Gastrocnemius medialis (tissue), 4 donors: ENCODE measurements at regions of chr5 and their contacts with region 1.

Region 1: GRCh38 chr5:143057580-143057999 is 287.4 kb downstream of the ARHGAP26 start:
- DNase-seq: peak in 1 of 2 donors; percentile 67
- ATAC-seq: peak; percentile 47 to 76
- H3K4me3 ChIP-seq: peak overlapping the region in 3 of 4 donors; percentile 0 to 15 (median 10)
- H3K27ac ChIP-seq: peak overlapping the region; percentile 86 to 91 (median 88)
- H3K4me1 ChIP-seq: peaks cover 93 to 97% of the 10 kb centered on the region in 2 donors
- H3K27me3 ChIP-seq: no peaks in the 10 kb centered on the region
- CTCF ChIP-seq: no peak
- POLR2A ChIP-seq: no peak

Region 2: DNA sequence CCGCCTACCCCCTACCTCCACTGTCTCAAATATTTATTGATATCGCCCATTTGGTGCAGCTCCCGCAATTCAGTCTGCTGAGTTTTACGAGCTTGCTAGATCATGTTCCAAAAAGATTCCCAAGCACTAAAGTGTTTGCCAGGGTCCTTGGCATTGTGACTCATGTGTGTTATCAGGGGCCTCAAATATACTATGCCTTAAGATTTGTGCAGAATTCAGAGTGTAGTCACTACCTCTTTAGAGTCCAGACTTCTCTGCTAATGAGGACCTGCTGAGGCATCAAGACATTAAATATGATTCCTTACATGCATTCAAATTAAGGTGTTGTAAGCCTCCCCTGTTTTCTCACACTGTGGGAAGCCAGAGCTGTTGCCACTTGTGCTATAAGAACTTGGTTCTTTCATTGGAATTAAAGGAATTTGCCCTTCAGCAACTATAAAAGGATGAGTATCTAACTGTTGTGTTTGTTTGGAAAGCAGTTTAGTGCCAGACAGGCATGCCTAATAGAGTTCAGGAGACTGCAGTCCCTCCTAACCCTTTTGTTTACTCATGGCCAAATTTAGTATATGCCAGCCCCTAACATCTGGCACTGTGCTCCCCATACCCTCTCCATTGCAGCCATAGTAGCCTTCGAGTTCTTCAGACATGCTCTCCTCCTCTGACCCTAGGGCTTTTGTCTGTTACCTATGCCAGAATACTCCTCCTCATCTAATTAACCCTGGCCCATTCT is 29.5 kb after region 1 on chr5:
- in situ Hi-C with region 1: no loop called
- intact Hi-C with region 1: no loop called
- DNase-seq: no peak
- ATAC-seq: no peak
- H3K4me3 ChIP-seq: no peak overlapping the region
- H3K27ac ChIP-seq: peak overlapping the region in 1 of 4 donors; percentile 32
- H3K4me1 ChIP-seq: peaks cover 20 to 30% of the 10 kb centered on the region in 2 donors
- H3K27me3 ChIP-seq: no peaks in the 10 kb centered on the region
- CTCF ChIP-seq: no peak
- POLR2A ChIP-seq: no peak

Region 3: GRCh38 chr5:143128412-143129071 is 71.0 kb after region 1 on chr5:
- in situ Hi-C with region 1: no loop called
- intact Hi-C with region 1: loop called (anchors 2 kb)
- DNase-seq: peak in 1 of 2 donors; percentile 14
- ATAC-seq: peak; percentile 81 to 83
- H3K4me3 ChIP-seq: peak overlapping the region in 3 of 4 donors; percentile 26 to 37 (median 37)
- H3K27ac ChIP-seq: peak overlapping the region; percentile 90 to 97 (median 95)
- H3K4me1 ChIP-seq: peaks cover 78 to 81% of the 10 kb centered on the region in 2 donors
- H3K27me3 ChIP-seq: no peaks in the 10 kb centered on the region
- CTCF ChIP-seq: no peak
- POLR2A ChIP-seq: peak in 1 of 2 donors; percentile 33